A549 (cell line): ENCODE measurements at regions of chr15 and their contacts with region 1.

Region 1: GRCh38 chr15:60362321-60363086 is 35.3 kb downstream of the ANXA2 start:
- DNase-seq: peak; percentile 64 to 86
- ATAC-seq: peak; percentile 15 to 35; a peak in 5 of 6 replicates
- H3K4me3 ChIP-seq: peak overlapping the region; percentile 2; the same call in 1 of the 3 replicates
- H3K27ac ChIP-seq: peak overlapping the region; percentile 75 to 86
- H3K4me1 ChIP-seq: peaks cover 81% of the 10 kb centered on the region
- CTCF ChIP-seq: no peak
- EP300 ChIP-seq: peak in 1 of 2 experiments; percentile 16; a peak in 2 of 5 replicates
- POLR2A ChIP-seq: no peak
- RAD21 ChIP-seq: no peak

Region 2: GRCh38 chr15:60255390-60255789 is 107.1 kb before region 1 on chr15:
- CTCF ChIA-PET with region 1: no interaction called
- POLR2A ChIA-PET with region 1: no interaction called
- DNase-seq: peak in 1 of 2 experiments; percentile 67
- ATAC-seq: peak; percentile 79 to 90
- H3K4me3 ChIP-seq: no peak overlapping the region
- H3K27ac ChIP-seq: no peak overlapping the region
- H3K4me1 ChIP-seq: peaks cover 9% of the 10 kb centered on the region; the same call in 2 of the 3 replicates
- CTCF ChIP-seq: no peak
- EP300 ChIP-seq: no peak
- POLR2A ChIP-seq: no peak
- RAD21 ChIP-seq: no peak

Region 3: GRCh38 chr15:60340207-60340921 is 22.1 kb before region 1 on chr15:
- CTCF ChIA-PET with region 1: interaction called, 51 read pairs
- POLR2A ChIA-PET with region 1: interaction called, 7 read pairs
- DNase-seq: no peak
- ATAC-seq: peak; percentile 17 to 30; a peak in 5 of 6 replicates
- H3K4me3 ChIP-seq: no peak overlapping the region
- H3K27ac ChIP-seq: peak overlapping the region; percentile 10 to 56; a peak in 4 of 6 replicates
- H3K4me1 ChIP-seq: peaks cover 47% of the 10 kb centered on the region
- CTCF ChIP-seq: peak; percentile 23; the same call in 1 of the 3 replicates
- EP300 ChIP-seq: no peak
- POLR2A ChIP-seq: no peak
- RAD21 ChIP-seq: peak in 1 of 2 experiments; percentile 38; a peak in 2 of 5 replicates

Region 4: DNA sequence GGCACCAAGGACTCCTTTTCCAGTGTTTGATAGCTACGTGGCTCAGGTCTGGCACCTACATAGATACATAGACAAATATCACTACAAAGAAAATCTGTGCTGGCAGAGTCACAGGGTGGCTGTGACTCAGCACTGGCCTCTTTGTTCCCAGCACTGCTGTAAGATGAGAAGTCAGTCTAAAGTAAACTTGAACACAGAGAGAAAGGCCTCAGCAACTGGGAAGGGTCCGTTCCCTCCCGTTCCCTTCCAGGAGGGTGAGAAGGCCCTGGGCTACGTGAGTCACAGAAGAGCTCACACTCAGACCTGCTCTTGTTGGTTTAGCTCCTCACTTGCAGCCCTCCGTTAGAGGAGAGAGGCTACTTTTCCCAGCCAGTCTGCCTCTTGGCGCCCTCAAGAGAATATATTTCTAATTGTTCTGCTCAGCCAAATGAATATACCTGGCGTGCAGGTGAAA is 12.2 kb after region 1 on chr15:
- CTCF ChIA-PET with region 1: interaction called, 174 read pairs
- POLR2A ChIA-PET with region 1: interaction called, 75 read pairs
- DNase-seq: peak; percentile 88 to 100
- ATAC-seq: peak; percentile 72 to 78
- H3K4me3 ChIP-seq: no peak overlapping the region
- H3K27ac ChIP-seq: peak overlapping the region; percentile 90
- H3K4me1 ChIP-seq: peaks cover 95% of the 10 kb centered on the region
- CTCF ChIP-seq: peak; percentile 37; the same call in 2 of the 3 replicates
- EP300 ChIP-seq: peak; percentile 93 to 97
- POLR2A ChIP-seq: no peak
- RAD21 ChIP-seq: peak; percentile 56 to 72

Region 5: GRCh38 chr15:60385620-60386552 is 23.4 kb after region 1 on chr15:
- CTCF ChIA-PET with region 1: interaction called, 58 read pairs
- POLR2A ChIA-PET with region 1: interaction called, 15 read pairs
- DNase-seq: peak in 1 of 2 experiments; percentile 24
- ATAC-seq: 0 out of 6 replicates have a peak, but pooled peaks of 1 of the 2 experiments have one; percentile 0
- H3K4me3 ChIP-seq: peak overlapping the region; percentile 7; the same call in 1 of the 3 replicates
- H3K27ac ChIP-seq: peak overlapping the region; percentile 5 to 56; a peak in 5 of 6 replicates
- H3K4me1 ChIP-seq: peaks cover 100% of the 10 kb centered on the region
- CTCF ChIP-seq: no peak
- EP300 ChIP-seq: no peak
- POLR2A ChIP-seq: no peak
- RAD21 ChIP-seq: no peak

Region 6: GRCh38 chr15:60408438-60409105 is 46.1 kb after region 1 on chr15:
- CTCF ChIA-PET with region 1: interaction called, 12 read pairs
- POLR2A ChIA-PET with region 1: interaction called, 4 read pairs
- DNase-seq: peak; percentile 86 to 92
- ATAC-seq: peak; percentile 81 to 85
- H3K4me3 ChIP-seq: no peak overlapping the region
- H3K27ac ChIP-seq: peak overlapping the region; percentile 90
- H3K4me1 ChIP-seq: peaks cover 59% of the 10 kb centered on the region
- CTCF ChIP-seq: no peak
- EP300 ChIP-seq: peak; percentile 82 to 90; a peak in 3 of 5 replicates
- POLR2A ChIP-seq: no peak
- RAD21 ChIP-seq: peak in 1 of 2 experiments; percentile 29; a peak in 3 of 5 replicates

Region 7: GRCh38 chr15:60520825-60521368 is 158.4 kb after region 1 on chr15:
- CTCF ChIA-PET with region 1: interaction called, 37 read pairs
- POLR2A ChIA-PET with region 1: interaction called, 3 read pairs
- DNase-seq: peak; percentile 68 to 84
- ATAC-seq: peak; percentile 91 to 93
- H3K4me3 ChIP-seq: no peak overlapping the region
- H3K27ac ChIP-seq: no peak overlapping the region
- H3K4me1 ChIP-seq: peaks cover 13% of the 10 kb centered on the region
- CTCF ChIP-seq: peak; percentile 98
- EP300 ChIP-seq: no peak
- POLR2A ChIP-seq: no peak
- RAD21 ChIP-seq: peak; percentile 94 to 98